ENCODE measurements at regions of chr2 and their contacts with region 1.

Region 1: DNA sequence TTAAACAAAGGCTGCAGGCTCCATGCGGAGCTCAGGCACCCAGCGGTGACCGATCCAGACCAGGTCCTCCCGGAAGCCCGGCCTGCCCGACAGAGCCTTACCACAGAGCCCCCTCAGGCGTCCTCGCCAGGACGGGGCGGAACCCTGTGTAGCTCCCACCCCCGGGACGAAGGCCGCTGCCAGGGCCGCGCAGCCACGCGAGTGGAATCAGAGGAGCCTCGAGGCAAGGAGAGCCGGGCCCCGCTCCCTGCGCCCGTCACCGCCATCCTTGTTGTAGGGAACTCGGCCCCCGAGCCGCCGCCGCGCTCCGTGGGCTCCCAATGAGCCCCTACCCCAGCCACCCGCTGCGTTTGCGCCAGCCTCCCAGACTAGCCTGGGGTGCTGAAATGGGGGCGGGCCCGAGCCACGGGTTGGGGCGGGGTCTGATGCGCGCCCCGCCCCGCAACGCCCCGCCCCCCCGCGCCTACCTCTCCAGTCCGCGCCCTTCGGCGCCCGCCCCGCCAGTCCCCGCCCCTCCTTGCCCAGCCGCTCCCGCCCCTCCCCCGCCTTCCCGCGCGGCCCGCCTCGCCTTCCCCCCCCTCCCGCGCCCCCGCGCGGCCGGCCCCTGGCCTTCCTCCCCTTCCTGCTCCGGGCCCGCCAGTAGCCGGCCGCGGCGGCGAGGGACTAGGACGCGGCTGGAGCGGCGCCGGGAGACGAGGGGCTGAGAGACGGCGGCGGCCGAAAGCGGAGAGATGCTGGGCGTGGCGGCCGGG is at the start of gene LIMS1:
- DNase-seq: peak; percentile 89
- H3K4me3 Mint-ChIP-seq: peak within 1 kb of the TSS; percentile 94
- H3K27ac Mint-ChIP-seq: peak within 1 kb of the TSS; percentile 91
- H3K4me1 Mint-ChIP-seq: peaks cover 47% of the 10 kb centered on the region
- H3K27me3 Mint-ChIP-seq: no peaks in the 10 kb centered on the region
- total RNA-seq, gene LIMS1: 129 to 136 TPM

Region 2: GRCh38 chr2:108448678-108449493 is 85.1 kb before region 1 on chr2 and contains the start of gene GCC2:
- CTCF ChIA-PET with region 1: interaction called, 3 read pairs
- POLR2A ChIA-PET with region 1: interaction called, 34 read pairs
- DNase-seq: peak; percentile 97
- H3K4me3 Mint-ChIP-seq: peak within 1 kb of the TSS; percentile 89
- H3K27ac Mint-ChIP-seq: peak within 1 kb of the TSS; percentile 87
- H3K4me1 Mint-ChIP-seq: peaks cover 40% of the 10 kb centered on the region
- H3K27me3 Mint-ChIP-seq: no peaks in the 10 kb centered on the region
- total RNA-seq, gene GCC2: 60.2 to 62.8 TPM

Measured in activated CD4-positive, alpha-beta memory T cell treated with anti-CD3 and anti-CD28 coated beads, Interleukin-2, amount 10 ng/mL, durations not matched to agents 7 days and 5 days (primary cell).